HepG2 (cell line): ENCODE measurements at regions of chr6 and their contacts with region 1.

Region 1: DNA sequence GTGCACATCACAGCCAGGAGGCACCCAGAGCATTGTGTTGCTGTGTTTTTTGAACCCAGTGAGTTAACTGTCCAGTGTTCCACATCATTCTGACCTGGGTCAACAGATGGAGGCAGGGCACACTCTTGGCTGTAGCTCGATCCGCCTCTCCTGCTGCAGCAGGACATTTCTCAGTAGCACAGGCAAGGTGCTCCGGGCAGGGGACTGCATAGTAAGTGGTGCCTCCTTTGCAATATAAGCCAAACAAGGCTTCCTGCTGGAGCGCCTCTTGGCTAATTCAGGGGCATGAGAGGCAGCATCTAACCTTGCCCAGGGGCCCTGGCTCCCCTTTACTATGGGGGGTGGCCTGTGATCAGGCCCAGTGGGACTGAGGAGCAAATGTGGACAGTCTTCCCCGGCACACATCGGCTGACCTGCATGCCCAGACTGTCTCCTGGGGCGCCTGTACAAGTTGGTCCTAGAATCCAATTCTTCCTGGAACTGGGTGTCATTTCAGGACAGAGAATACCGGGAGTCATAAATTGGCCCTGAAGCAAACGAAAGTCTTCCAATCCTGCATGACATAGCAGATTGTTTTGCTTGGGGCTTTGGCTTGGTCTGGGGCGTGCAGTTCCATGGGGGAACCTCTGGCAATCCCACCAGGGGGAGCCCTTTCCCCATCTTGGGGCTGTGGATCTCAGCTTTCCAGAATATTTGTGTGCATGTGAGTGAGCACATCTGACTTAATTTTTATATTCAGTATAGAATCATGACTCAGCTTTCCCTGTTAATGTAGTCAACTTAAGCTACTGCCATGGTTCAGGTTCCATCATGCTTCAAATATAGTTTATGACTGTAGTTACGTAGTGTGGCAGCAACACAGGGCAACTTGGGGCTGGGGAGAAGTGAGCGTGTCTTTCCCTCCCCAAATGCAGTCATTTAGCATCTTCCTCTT is 56.0 kb upstream of the DDR1 start:
- DNase-seq: peak; percentile 85
- ATAC-seq: peak; percentile 92
- H3K4me3 ChIP-seq: peak overlapping the region; percentile 45 to 76 (median 63)
- H3K27ac ChIP-seq: peak overlapping the region; percentile 69
- H3K4me1 ChIP-seq: peaks cover 61% of the 10 kb centered on the region
- H3K27me3 ChIP-seq: no peaks in the 10 kb centered on the region
- CTCF ChIP-seq: peak; percentile 97
- EP300 ChIP-seq: peak in 1 of 2 experiments; percentile 52; a peak in 1 of 4 replicates
- POLR2A ChIP-seq: no peak
- RAD21 ChIP-seq: peak; percentile 97

Region 2: GRCh38 chr6:30600451-30600961 is 227.8 kb before region 1 on chr6:
- CTCF ChIA-PET with region 1: no interaction called
- POLR2A ChIA-PET with region 1: no interaction called
- in situ Hi-C with region 1: no loop called
- intact Hi-C with region 1: no loop called
- DNase-seq: no peak
- ATAC-seq: no peak
- H3K4me3 ChIP-seq: no peak overlapping the region
- H3K27ac ChIP-seq: no peak overlapping the region
- H3K4me1 ChIP-seq: no peaks in the 10 kb centered on the region
- H3K27me3 ChIP-seq: no peaks in the 10 kb centered on the region
- CTCF ChIP-seq: no peak
- EP300 ChIP-seq: no peak
- POLR2A ChIP-seq: no peak
- RAD21 ChIP-seq: no peak

Region 3: DNA sequence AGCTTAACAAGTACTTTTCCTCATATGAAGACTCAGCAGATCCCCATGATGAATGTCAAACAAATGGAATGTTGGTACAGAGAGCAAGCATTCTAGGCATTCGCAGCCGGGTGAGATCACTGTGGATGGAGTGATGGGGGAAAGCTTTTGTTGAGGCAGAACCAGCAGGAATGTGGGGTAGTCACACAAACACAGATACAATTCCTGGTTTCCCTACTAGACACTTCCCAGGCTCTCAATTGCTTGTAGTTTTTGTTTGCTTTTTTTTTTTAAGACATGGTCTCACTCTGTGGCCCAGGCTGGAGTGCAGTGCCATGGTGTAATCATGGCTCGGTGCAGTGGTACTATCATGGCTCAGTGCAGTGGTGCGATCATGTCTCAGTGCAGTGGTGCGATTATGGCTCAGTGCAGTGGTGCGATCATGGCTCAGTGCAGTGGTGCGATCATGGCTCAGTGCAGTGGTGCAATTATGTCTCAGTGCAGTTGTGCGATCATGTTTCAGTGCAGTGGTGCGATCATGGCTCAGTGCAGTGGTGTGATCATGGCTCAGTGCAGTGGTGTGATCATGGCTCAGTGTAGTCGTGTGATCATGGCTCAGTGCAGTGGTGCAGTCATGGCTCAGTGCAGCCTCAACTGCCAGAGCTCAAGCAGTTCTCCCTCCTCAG is 68.6 kb before region 1 on chr6:
- CTCF ChIA-PET with region 1: interaction called, 3 read pairs
- POLR2A ChIA-PET with region 1: interaction called, 9 read pairs
- in situ Hi-C with region 1: no loop called
- intact Hi-C with region 1: loop called (anchors 1 kb)
- DNase-seq: peak; percentile 97
- ATAC-seq: peak; percentile 66
- H3K4me3 ChIP-seq: peak overlapping the region in 1 of 3 experiments; percentile 13; a peak in 1 of 6 replicates
- H3K27ac ChIP-seq: peak overlapping the region; percentile 80
- H3K4me1 ChIP-seq: peaks cover 81% of the 10 kb centered on the region
- H3K27me3 ChIP-seq: no peaks in the 10 kb centered on the region
- CTCF ChIP-seq: no peak
- EP300 ChIP-seq: peak; percentile 64 to 65; a peak in 3 of 4 replicates
- POLR2A ChIP-seq: no peak
- RAD21 ChIP-seq: no peak

Region 4: GRCh38 chr6:30877419-30878371 is 49.4 kb after region 1 on chr6:
- CTCF ChIA-PET with region 1: interaction called, 76 read pairs
- POLR2A ChIA-PET with region 1: interaction called, 20 read pairs
- in situ Hi-C with region 1: loop called (anchors 5 kb)
- intact Hi-C with region 1: loop called (anchors 1 kb)
- DNase-seq: peak; percentile 91
- ATAC-seq: peak; percentile 84
- H3K4me3 ChIP-seq: peak overlapping the region; percentile 48 to 69 (median 49)
- H3K27ac ChIP-seq: no peak overlapping the region
- H3K4me1 ChIP-seq: peaks cover 48% of the 10 kb centered on the region
- H3K27me3 ChIP-seq: peaks cover 6 to 34% of the 10 kb centered on the region in 2 experiments
- CTCF ChIP-seq: peak; percentile 99
- EP300 ChIP-seq: peak in 1 of 2 experiments; percentile 28; a peak in 1 of 4 replicates
- POLR2A ChIP-seq: no peak
- RAD21 ChIP-seq: peak; percentile 97

Region 5: GRCh38 chr6:30914076-30914853 is 86.0 kb after region 1 on chr6 and contains the start of gene VARS2:
- CTCF ChIA-PET with region 1: interaction called, 9 read pairs
- POLR2A ChIA-PET with region 1: interaction called, 4 read pairs
- in situ Hi-C with region 1: no loop called
- intact Hi-C with region 1: loop called (anchors 1 kb)
- DNase-seq: peak; percentile 92
- ATAC-seq: peak; percentile 96
- H3K4me3 ChIP-seq: peak within 1 kb of the TSS; percentile 61 to 80 (median 78)
- H3K27ac ChIP-seq: peak within 1 kb of the TSS; percentile 81
- H3K4me1 ChIP-seq: peaks cover 32% of the 10 kb centered on the region
- H3K27me3 ChIP-seq: no peaks in the 10 kb centered on the region
- CTCF ChIP-seq: peak; percentile 81
- EP300 ChIP-seq: peak in 1 of 2 experiments; percentile 35; a peak in 1 of 4 replicates
- POLR2A ChIP-seq: peak; percentile 85 to 89
- RAD21 ChIP-seq: peak; percentile 85; the same call in 1 of the 2 replicates
- total RNA-seq, gene VARS2: 45.9 and 71.8 TPM in 2 replicates

Region 6: GRCh38 chr6:30981942-30982772 is 153.9 kb after region 1 on chr6:
- CTCF ChIA-PET with region 1: no interaction called
- POLR2A ChIA-PET with region 1: no interaction called
- in situ Hi-C with region 1: no loop called
- intact Hi-C with region 1: no loop called
- DNase-seq: peak; percentile 37
- ATAC-seq: peak; percentile 98
- H3K4me3 ChIP-seq: no peak overlapping the region
- H3K27ac ChIP-seq: no peak overlapping the region
- H3K4me1 ChIP-seq: peaks cover 7% of the 10 kb centered on the region; the same call in 1 of the 2 replicates
- H3K27me3 ChIP-seq: 0 out of 5 replicates have a peak, but pooled peaks cover 0 to 9% of the 10 kb centered on the region in 2 experiments
- CTCF ChIP-seq: peak; percentile 24; the same call in 1 of the 2 replicates
- EP300 ChIP-seq: no peak
- POLR2A ChIP-seq: no peak
- RAD21 ChIP-seq: no peak

Region 7: GRCh38 chr6:31007694-31008093 is 179.4 kb after region 1 on chr6:
- CTCF ChIA-PET with region 1: no interaction called
- POLR2A ChIA-PET with region 1: no interaction called
- in situ Hi-C with region 1: no loop called
- intact Hi-C with region 1: no loop called
- DNase-seq: no peak
- ATAC-seq: no peak
- H3K4me3 ChIP-seq: no peak overlapping the region
- H3K27ac ChIP-seq: no peak overlapping the region
- H3K4me1 ChIP-seq: peaks cover 22% of the 10 kb centered on the region
- H3K27me3 ChIP-seq: peaks cover 0 to 12% of the 10 kb centered on the region in 2 experiments; a peak in 2 of 5 replicates
- CTCF ChIP-seq: no peak
- EP300 ChIP-seq: no peak
- POLR2A ChIP-seq: no peak
- RAD21 ChIP-seq: no peak

Region 8: DNA sequence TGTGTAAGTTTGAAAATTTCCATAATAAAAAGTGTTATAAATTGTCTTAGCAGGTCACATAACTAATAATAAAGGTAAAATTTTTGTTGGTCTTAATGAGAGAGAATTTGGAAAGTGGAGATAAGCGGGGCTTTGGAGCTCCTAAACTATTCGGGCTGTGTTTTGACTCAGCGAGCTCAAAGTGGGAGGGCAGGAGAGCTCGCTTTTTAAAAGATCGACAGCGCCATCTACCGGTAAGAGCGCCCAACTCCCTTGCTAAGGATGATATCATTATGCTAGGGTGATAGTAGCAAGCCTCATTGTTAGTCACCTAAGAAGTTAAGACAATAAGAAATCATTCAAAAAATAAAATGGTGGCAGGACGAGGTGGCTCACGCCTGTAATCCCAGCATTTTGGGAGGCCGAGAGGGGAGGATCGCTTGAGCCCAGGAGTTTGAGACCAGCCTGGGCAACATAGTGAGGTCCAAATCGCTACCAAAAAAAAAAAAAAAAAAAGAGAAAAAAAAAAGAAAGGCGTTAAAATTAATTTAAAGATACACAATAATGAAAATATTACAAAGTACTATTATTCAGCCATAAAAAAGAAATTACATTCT is 259.3 kb after region 1 on chr6:
- CTCF ChIA-PET with region 1: interaction called, 8 read pairs
- POLR2A ChIA-PET with region 1: interaction called, 4 read pairs
- in situ Hi-C with region 1: loop called (anchors 5 kb)
- intact Hi-C with region 1: loop called (anchors 2 kb)
- DNase-seq: peak; percentile 78
- ATAC-seq: peak; percentile 95
- H3K4me3 ChIP-seq: no peak overlapping the region
- H3K27ac ChIP-seq: no peak overlapping the region
- H3K4me1 ChIP-seq: peaks cover 26% of the 10 kb centered on the region
- H3K27me3 ChIP-seq: peaks cover 1 to 15% of the 10 kb centered on the region in 2 experiments; a peak in 2 of 5 replicates
- CTCF ChIP-seq: peak; percentile 91
- EP300 ChIP-seq: no peak
- POLR2A ChIP-seq: no peak
- RAD21 ChIP-seq: peak; percentile 80